A673 (cell line): ENCODE measurements at regions of chr19 and their contacts with region 1.

Region 1: DNA sequence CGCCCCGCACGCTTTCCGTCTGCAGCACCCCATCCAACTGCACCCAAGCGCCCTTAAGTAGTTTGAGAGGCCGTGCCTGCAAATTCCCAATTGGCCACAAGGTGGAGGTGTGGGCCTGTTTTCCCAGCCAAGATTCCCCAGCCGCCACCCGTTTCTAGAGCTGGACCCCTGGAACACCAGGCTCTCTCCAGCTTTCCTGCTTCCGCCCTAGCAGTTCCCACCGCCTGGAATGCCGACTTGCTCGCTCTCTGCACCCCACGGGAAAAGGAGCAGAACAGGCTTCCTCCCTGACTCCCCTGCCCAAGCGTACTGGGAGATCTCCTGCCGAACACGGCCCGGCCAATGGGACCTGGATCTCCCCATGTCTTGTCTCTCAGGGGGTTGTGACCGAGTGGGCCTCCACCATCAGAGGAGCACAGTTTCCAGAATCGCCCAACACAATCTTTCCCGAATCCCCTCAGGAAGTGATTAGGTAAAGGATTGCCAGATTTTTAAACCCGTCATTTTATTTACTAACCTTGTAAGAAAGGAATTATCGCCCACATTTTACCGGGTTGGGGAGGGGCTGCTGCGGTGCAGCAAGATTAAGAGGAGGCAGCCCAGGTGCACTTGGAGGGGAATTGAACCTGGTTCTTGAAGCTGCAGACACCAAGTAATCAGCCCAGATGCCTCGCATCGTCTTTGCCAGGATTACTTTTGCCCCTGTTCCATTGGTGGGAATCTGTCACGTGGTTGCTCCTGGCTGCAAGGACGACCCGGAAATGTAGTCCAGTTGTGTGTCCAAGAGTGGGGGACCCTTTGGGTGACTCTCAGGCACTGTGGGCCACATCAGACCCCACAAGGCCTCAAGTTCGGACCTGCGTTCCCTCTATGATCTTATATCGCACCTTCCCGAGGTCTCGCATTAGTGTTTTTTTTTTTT is 3.5 kb upstream of the NAPSA start:
- DNase-seq: peak; percentile 89
- H3K4me3 ChIP-seq: peak overlapping the region; percentile 59
- H3K27ac ChIP-seq: peak overlapping the region; percentile 67
- H3K4me1 ChIP-seq: no peaks in the 10 kb centered on the region
- H3K27me3 ChIP-seq: no peaks in the 10 kb centered on the region
- CTCF ChIP-seq: peak; percentile 86

Region 2: DNA sequence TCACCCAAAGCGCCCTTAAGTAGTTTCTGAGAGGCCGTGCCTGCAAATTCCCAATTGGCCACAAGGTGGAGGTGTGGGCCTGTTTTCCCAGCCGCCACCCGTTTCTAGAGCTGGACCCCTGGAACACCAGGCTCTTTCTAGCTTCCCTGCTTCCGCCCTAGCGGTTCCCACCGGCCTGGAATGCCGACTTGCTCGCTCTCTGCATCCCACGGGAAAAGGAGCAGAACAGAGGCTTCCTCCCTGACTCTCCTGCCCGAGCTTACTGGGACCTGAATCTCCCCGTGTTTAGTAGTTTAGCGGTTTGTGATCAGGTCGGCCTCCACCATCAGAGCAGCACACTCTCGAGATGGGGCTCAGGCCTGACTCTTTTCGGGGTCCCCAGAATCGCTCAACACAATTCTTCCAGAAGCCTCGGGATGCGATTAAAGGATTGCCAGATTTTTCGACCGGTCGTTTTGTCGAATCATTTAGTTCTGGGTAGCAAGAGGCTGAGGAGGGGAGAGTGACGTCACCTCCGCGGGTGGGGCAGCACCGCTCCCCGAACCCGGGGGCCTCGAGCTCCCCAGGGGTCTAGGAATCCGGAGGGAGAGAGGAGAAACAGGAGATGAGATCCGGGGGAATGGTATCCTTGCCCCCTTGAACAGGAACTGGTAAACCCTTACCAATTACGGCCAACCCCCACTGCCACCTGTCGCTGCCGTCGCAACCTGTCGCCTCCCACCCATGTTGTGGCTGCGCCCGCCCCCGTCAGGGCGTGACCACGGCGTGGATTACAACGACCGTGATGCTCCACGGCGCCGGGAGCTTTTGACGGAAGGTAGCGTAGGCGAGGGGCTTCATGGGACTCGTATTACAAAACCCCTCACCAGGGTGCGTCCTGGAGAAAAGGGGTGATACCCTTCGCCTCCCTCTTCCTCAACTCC is 11.5 kb before region 1 on chr19:
- CTCF ChIA-PET with region 1: interaction called, 15 read pairs
- POLR2A ChIA-PET with region 1: no interaction called
- intact Hi-C with region 1: no loop called
- DNase-seq: peak; percentile 89
- H3K4me3 ChIP-seq: peak overlapping the region; percentile 65
- H3K27ac ChIP-seq: peak overlapping the region; percentile 85
- H3K4me1 ChIP-seq: no peaks in the 10 kb centered on the region
- H3K27me3 ChIP-seq: no peaks in the 10 kb centered on the region
- CTCF ChIP-seq: peak; percentile 87

Region 3: GRCh38 chr19:50414864-50415660 is 46.2 kb after region 1 on chr19:
- CTCF ChIA-PET with region 1: interaction called, 4 read pairs
- POLR2A ChIA-PET with region 1: no interaction called
- intact Hi-C with region 1: loop called (anchors 2 kb)
- DNase-seq: peak; percentile 84
- H3K4me3 ChIP-seq: no peak overlapping the region
- H3K27ac ChIP-seq: no peak overlapping the region
- H3K4me1 ChIP-seq: no peaks in the 10 kb centered on the region
- H3K27me3 ChIP-seq: no peaks in the 10 kb centered on the region
- CTCF ChIP-seq: peak; percentile 92

Region 4: GRCh38 chr19:50461066-50461875 is 92.4 kb after region 1 on chr19:
- CTCF ChIA-PET with region 1: interaction called, 8 read pairs
- POLR2A ChIA-PET with region 1: no interaction called
- intact Hi-C with region 1: loop called (anchors 1 kb)
- DNase-seq: peak; percentile 75
- H3K4me3 ChIP-seq: no peak overlapping the region
- H3K27ac ChIP-seq: no peak overlapping the region
- H3K4me1 ChIP-seq: peaks cover 5% of the 10 kb centered on the region
- H3K27me3 ChIP-seq: peaks cover 4% of the 10 kb centered on the region
- CTCF ChIP-seq: peak; percentile 86